ENCODE measurements at regions of chr18 and their contacts with region 1.

Region 1: DNA sequence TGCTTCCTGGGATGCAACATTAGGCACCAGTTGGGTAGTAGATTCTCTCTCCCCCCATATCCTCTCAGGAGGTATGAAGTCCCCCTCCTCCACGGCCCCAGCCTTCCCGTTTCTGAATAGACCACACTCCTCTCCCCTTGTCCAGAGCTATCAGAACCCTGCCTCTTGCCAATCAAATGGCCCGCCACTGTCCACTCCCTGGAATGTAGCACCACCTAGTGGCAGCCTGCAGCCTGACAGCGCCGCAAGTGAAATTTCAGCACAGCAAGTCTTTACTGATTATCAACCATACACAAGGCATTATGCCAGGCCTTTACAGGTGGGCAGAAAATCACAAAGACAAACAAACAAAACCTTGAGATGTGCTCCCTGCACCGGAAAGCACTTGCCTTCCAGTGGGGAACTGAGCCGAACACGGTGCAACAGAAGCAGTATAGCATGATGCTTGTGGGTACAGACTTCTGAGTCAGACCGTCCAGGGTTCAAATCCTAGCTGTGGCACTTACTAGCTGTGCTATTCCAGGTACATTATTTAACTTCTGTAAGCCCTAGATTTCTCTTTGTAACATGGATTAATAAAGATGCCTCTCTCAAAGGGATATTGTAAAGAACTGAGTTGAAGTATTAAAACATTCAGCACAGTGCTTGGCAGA is 174.0 kb downstream of the SMAD2 start:
- DNase-seq: peak; percentile 68
- CTCF ChIP-seq: peak; percentile 99

Region 2: GRCh38 chr18:47215554-47216138 is 540.8 kb before region 1 on chr18:
- in situ Hi-C with region 1: loop called (anchors 25 kb)
- DNase-seq: peak; percentile 29
- CTCF ChIP-seq: peak; percentile 59

Region 3: DNA sequence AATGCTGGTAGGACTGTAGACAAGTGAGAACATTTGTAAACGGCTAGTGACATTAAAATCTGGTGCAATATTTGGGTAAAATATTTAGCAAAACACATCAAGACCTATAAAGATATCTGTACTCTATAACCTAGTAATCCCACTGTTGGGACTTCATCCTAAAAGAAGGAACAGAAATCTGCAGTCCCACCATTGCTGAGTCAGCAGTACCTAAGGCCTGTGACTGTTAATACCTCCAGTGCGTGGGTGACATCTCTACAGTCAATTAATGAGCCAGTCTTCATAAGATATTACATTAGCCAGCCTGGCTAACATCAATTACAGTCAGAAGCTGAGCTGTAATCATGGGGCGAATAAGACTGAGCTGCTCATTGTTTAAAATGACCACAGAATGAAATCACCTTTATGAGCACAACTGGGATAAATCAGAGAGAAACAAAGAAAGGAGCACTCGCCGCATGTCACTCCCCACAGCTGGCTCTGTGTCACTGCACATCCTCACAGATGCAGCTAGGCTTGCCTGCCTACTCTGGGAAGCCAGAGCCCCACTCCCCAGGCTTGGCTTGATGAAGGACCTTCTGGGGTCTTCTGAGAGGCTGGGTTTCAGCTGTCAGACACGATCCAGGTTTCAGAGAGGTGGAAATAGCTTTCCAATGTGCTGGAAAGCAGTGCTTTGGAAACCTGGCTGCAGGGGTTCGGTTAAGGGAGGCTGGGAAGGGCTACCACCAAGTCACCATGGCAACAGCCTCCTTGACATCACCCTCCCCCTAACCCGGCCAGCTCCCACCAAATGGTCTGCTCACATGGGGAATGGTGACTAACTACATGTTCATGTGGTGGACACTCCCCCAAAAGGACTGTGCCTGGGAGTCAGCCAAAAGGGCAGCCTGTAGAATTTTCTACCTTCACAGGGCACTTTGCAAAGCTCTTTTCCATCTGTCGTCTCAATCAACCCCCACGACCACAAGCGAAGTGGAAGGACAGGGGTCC is 507.7 kb after region 1 on chr18:
- in situ Hi-C with region 1: no loop called
- DNase-seq: no peak
- CTCF ChIP-seq: no peak

Region 4: DNA sequence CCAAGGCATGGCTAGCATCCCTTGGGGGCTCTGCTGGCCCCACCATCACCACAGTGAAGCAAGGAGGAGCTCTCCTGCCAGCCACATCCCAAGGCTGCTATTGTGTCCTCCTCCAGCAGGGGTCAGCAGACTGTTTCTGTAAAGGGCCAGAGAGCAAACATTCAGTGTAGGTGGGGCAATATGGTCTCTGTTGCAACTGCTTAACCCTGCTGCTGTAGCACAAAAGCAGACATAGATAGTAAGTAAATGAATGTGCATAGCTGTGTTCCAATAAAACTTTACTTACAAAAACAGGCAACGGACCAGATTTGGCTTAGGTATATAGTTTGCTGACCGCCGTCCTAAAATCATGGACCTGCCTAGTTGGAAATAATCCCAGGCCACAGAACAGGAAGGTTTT is 689.0 kb after region 1 on chr18:
- in situ Hi-C with region 1: loop called (anchors 25 kb)
- DNase-seq: peak; percentile 66
- CTCF ChIP-seq: peak; percentile 90

Measured in GM13977 (cell line).